ENCODE measurements at regions of chr4 and their contacts with region 1.

Region 1: DNA sequence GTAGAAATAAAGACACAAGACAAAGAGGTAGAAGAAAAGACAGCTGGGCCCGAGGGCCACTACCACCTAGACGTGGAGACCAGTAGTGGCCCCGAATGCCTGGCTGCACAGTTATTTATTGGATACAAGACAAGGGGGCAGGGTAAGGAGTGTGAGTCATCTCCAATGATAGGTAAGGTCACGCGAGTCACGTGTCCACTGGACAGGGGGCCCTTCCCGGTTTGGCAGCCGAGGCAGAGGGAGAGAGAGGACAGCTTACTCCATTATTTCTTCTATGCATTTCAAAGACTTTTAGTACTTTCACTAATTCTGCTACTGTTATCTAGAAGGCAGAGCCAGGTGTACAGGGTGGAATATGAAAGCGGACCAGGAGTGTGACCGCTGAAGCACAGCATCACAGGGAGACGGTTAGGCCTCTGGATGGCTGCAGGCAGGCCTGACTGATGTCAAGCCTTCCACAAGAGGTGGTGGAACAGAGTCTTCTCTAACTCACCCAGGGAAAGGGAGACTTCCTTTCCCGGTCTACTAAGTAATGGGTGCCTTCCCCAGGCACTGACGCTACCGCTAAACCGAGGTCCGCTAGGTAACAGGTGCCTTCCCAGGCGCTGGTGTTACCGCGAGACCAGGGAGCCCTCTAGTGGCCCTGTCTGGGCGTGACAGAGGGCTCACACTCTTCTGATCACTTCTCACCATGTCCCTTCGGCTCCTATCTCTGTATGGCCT is 44.9 kb downstream of the ZBTB49 start:
- DNase-seq: peak; percentile 65
- H3K4me3 Mint-ChIP-seq: no peak overlapping the region
- H3K27ac Mint-ChIP-seq: no peak overlapping the region
- H3K4me1 Mint-ChIP-seq: no peaks in the 10 kb centered on the region
- H3K27me3 Mint-ChIP-seq: peaks cover 2% of the 10 kb centered on the region

Region 2: DNA sequence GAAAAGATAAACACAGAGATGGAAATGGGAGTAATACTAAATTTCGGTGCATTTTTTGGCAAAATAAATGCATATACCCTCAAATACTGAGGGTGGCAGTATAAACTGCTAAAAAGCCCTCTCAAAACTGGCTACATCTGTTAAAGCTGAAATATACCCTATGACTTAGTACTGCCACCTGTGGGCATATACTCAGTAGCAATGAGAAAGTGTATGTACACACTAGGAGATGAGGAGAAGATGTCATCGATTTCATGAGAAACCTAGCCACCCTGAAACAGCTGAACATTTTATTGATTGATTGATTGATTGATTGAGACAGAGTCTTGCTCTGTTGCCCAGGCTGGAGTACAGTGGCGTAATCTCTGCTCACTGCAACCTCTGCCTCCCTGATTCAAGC is 74.7 kb before region 1 on chr4:
- intact Hi-C with region 1: loop called (anchors 1 kb)
- DNase-seq: no peak
- H3K4me3 Mint-ChIP-seq: no peak overlapping the region
- H3K27ac Mint-ChIP-seq: no peak overlapping the region
- H3K4me1 Mint-ChIP-seq: peaks cover 7% of the 10 kb centered on the region
- H3K27me3 Mint-ChIP-seq: peaks cover 4% of the 10 kb centered on the region

Region 3: DNA sequence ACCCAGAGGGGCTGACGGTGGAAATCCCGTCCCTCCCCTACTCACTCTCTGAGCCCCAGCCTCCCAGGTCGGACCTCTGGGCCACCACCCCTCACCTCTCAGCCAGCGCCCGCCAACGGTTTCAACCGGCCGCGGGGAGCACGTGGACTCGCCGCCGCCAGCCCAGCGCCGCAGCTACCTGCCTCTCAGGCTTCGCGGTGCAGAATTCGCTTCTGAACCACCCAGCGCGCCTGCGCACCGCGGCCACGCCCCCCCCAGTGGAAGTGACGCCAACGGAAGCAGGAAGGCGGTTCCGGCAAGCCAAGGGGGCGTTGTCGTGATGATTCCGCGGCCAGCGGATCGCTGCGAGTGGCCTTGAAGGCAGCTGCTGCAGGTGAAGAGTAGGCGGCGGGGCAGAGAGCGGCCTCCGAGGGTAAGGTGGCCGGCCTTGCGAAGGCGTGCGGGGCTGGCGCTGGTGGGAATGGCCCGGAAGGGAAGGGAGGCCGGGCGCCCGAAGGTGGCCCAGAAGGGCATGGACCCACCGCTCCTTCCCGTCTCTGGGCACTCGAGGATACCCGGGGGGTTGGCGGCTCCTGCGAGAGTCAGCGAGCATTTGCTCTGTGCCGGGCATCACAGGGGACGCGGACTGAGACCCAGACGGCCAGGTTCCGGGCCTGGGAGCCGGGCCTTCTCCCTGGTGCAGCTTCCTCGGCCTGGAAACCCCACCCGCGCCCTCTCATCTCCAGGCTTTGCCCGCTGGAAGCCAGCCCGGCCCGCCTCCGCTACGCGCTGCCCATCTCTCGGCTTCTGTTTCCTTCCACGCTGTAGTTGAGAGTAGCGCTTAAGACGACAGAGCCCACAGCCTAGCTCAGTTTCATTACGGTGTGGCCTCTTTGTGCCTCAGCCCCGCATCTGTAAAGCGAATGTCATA is 44.8 kb before region 1 on chr4 and contains the starts of genes LYAR and ZBTB49:
- intact Hi-C with region 1: loop called (anchors 1 kb)
- DNase-seq: peak; percentile 96
- H3K4me3 Mint-ChIP-seq: peak within 1 kb of the TSS; percentile 97
- H3K27ac Mint-ChIP-seq: peak within 1 kb of the TSS; percentile 90
- H3K4me1 Mint-ChIP-seq: peaks cover 31% of the 10 kb centered on the region
- H3K27me3 Mint-ChIP-seq: no peaks in the 10 kb centered on the region
- total RNA-seq, gene LYAR: 86.8 and 88.3 TPM in 2 replicates
- total RNA-seq, gene ZBTB49: 7.4 and 8.5 TPM in 2 replicates

Region 4: GRCh38 chr4:4606321-4606720 is 271.4 kb after region 1 on chr4:
- intact Hi-C with region 1: no loop called
- DNase-seq: no peak
- H3K4me3 Mint-ChIP-seq: no peak overlapping the region
- H3K27ac Mint-ChIP-seq: no peak overlapping the region
- H3K4me1 Mint-ChIP-seq: no peaks in the 10 kb centered on the region
- H3K27me3 Mint-ChIP-seq: peaks cover 1% of the 10 kb centered on the region